BJ (cell line): ENCODE measurements at regions of chr4 and their contacts with region 1.

Region 1: DNA sequence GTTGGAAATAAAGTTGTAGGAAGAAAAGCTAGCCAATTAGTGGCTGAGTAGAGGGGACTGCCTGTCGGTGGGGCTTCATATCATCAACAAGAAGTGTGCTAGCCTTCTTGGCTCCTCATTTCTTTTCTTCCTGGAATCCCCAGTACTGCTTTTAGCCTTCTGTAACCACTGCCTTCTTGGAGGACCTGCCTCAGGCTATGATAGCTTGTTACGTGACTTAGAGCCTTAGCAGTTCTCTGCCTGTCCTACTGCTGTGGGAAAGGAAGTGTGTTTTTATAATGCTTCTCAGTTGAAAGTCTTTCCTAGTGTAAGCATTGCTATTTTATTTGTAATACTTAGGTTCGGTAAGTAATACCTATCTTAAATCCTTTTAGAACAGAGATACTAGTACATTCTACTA is 61.9 kb downstream of the LARP1B start:
- DNase-seq: no peak
- H3K4me3 ChIP-seq: no peak overlapping the region
- H3K27me3 ChIP-seq: no peaks in the 10 kb centered on the region
- CTCF ChIP-seq: no peak

Region 2: DNA sequence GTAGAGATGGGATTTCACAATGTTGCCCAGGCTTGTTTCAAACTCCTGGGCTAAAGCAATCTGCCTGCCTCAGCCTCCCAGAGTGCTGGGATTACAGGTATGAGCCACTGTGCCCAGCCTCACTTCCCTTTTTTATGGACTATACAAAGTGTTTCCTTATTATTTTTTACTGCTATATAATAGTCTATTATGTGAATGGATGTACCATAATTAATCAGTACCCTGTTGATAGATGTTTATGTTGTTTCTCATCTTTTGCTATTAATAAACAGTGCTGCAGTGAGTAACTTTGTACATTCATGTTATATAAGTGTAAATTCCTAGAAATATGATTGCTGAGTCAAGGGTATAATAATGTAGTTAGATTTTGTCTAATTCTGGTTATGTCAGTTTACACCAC is 97.7 kb before region 1 on chr4:
- CTCF ChIA-PET with region 1: no interaction called
- POLR2A ChIA-PET with region 1: interaction called, 19 read pairs
- DNase-seq: no peak
- H3K4me3 ChIP-seq: no peak overlapping the region
- H3K27me3 ChIP-seq: no peaks in the 10 kb centered on the region
- CTCF ChIP-seq: no peak

Region 3: GRCh38 chr4:128107766-128108165 is 15.3 kb before region 1 on chr4:
- CTCF ChIA-PET with region 1: no interaction called
- POLR2A ChIA-PET with region 1: no interaction called
- DNase-seq: no peak
- H3K4me3 ChIP-seq: no peak overlapping the region
- H3K27me3 ChIP-seq: no peaks in the 10 kb centered on the region
- CTCF ChIP-seq: no peak